Activated T-helper 2 cell treated with anti-CD3 and anti-CD28 coated beads, Interferon-gamma antibody, Interleukin-2, Interleukin-4, amounts not matched to agents 10 μg/mL and 5 μg/mL and 100 μg/mL, durations not matched to agents 14 hours and 24 hours and 36 hours (primary cell): ENCODE measurements at regions of chr12 and their contacts with region 1.

Region 1: DNA sequence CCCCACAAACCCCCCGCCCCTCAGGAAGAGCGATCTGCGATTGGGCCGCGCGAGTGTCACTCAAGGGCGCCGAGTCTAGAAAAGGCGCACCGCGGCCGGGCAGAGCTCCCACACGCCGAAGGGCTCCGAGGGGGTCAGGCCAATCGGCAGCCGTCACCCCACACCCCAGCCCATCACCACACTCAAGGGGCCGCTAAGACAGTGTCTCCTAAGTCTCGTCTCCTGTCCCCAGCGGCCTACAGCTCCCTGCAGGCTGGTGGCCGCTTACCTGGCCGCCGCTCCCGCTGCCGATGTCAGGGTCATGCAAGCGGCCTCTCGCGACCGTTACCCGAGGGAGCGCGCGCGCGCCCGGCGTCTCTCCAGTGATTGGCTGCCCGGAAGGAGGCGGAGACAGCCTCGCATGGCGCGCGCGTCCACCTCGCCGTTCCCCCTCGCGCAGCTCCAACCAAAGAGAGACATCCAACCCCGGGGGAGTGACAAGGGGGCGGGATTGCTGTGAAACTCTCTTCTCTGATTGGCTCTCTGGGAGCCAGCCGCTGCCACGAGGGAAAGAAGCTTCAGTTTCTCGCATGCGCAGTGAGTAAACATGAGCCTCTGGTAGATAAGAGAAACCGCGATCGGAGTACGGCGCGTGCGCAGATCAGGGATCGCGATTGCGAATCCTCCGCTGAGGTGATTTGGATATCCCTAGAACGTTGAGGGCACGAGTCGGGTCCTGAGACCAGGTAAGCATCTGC is at the starts of genes MPHOSPH9 and MTRFR:
- DNase-seq: peak; percentile 99
- H3K4me3 Mint-ChIP-seq: peak within 1 kb of the TSS; percentile 96
- H3K27ac Mint-ChIP-seq: peak within 1 kb of the TSS; percentile 91
- H3K4me1 Mint-ChIP-seq: peaks cover 50% of the 10 kb centered on the region
- H3K27me3 Mint-ChIP-seq: no peaks in the 10 kb centered on the region
- total RNA-seq, gene MPHOSPH9: 97.0 and 99.7 TPM in 2 replicates
- total RNA-seq, gene MTRFR: 28.9 and 31.1 TPM in 2 replicates

Region 2: DNA sequence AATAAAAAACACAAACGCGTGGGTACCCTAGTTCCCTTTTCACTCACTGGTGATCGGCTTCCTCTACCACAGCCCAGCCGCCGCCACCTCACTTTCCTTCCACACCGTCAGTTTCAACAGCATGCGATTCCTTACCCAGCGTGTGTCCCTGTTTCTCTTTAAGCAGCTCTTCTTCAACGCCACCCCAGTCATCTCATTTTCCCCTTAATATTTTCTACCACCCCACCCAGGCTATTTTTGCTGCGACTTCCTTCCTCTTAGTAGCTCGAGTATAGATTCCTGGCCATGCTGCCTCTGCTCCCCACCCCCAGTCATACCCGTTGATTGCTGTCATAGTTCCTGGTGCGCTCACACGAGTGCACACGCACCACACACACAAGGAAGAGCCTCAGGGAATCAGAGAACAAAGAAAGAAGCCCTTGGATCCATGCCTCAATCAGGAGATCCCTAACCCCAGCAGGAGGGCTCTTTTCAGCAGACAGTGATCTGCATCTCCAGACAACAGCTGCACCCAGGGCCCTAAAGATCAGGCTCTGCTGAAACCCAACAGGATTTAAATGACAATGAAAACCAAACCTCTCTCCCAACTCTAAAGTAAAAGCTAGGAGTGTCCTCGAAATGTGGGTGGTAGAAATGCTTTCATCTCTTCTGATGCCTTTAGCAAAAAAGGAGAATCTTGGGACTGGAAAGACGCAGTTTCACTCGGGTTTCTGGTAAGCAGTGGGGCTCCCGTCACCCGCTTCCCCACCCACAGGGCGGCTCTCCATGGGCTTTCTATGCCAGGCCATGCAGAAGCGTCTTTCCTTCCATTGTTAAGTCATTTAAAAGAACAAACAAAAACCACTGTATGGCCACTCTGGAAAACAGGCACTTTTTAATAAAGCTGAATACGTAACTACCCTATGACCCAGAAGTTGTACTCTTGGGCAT is 360.9 kb before region 1 on chr12:
- intact Hi-C with region 1: loop called (anchors 5 kb)
- DNase-seq: no peak
- H3K4me3 Mint-ChIP-seq: peak overlapping the region; percentile 59
- H3K27ac Mint-ChIP-seq: peak overlapping the region; percentile 69
- H3K4me1 Mint-ChIP-seq: peaks cover 49% of the 10 kb centered on the region
- H3K27me3 Mint-ChIP-seq: peaks cover 16% of the 10 kb centered on the region

Region 3: GRCh38 chr12:122974274-122974891 is 258.6 kb before region 1 on chr12:
- intact Hi-C with region 1: loop called (anchors 1 kb)
- DNase-seq: peak; percentile 98
- H3K4me3 Mint-ChIP-seq: peak overlapping the region; percentile 93
- H3K27ac Mint-ChIP-seq: peak overlapping the region; percentile 98
- H3K4me1 Mint-ChIP-seq: peaks cover 11% of the 10 kb centered on the region
- H3K27me3 Mint-ChIP-seq: no peaks in the 10 kb centered on the region

Region 4: GRCh38 chr12:123024819-123025391 is 208.1 kb before region 1 on chr12:
- intact Hi-C with region 1: loop called (anchors 5 kb)
- DNase-seq: no peak
- H3K4me3 Mint-ChIP-seq: no peak overlapping the region
- H3K27ac Mint-ChIP-seq: peak overlapping the region; percentile 42
- H3K4me1 Mint-ChIP-seq: peaks cover 20% of the 10 kb centered on the region
- H3K27me3 Mint-ChIP-seq: no peaks in the 10 kb centered on the region

Region 5: DNA sequence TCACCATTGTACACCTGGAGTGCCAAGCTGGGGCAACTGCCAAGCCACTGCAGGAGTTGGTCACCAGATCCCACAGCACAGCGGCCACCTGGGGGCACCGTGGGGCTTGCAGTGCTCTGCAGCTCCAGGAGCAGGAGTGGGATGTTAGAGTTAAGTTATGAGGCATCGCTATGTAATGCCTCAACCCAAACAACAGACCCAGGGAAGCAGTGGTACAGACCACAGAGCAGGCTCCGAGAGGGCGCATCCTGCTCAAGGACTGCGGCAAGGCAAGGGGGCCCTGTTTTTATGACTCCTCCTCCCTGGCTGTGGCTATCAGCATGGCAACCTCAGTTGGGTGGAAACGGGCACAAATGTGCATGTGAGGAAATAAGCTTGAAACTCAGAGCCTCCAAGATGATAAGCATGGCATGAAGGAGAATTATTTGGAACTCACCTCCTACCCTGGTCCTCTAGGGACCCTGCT is 189.4 kb before region 1 on chr12:
- intact Hi-C with region 1: loop called (anchors 1 kb)
- DNase-seq: peak; percentile 56
- H3K4me3 Mint-ChIP-seq: no peak overlapping the region
- H3K27ac Mint-ChIP-seq: peak overlapping the region; percentile 56
- H3K4me1 Mint-ChIP-seq: peaks cover 16% of the 10 kb centered on the region
- H3K27me3 Mint-ChIP-seq: no peaks in the 10 kb centered on the region

Region 6: DNA sequence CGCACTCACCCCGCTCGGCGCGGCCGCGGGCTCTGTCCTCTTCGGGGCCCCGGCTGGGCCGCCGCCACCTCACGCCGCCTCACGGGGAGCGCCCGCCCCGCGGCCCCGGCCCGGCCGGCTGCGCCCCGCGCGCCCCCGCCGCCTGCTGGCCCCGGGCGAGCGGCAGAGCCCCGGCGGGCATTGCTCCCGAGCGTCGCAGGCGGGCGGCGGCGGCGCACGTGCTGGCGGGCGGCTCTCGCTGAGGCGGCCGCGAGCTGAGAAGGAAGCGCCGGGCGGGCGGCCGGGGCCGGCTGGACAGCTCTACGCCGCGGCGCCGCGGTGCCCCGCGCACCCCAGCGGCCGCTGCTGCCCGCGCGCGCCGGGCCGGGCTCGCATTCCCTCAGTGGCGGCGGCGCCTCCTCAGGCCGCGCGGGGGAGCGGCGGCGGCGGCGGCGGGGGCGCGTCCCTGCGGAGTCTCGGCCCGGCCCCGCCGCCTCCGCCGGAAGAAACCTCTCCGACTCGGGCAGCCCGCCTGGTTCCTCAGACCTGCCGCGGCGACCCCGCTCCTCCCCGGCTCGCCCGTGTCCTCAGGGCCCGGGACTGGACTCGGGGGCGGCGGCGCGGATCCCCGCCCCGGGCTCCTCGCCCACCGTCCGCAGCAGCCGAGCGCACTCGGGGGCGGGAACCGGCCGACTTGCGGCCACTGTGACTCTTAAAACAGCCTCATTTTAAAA is 82.1 kb before region 1 on chr12 and contains the start of gene PITPNM2:
- intact Hi-C with region 1: loop called (anchors 5 kb)
- DNase-seq: peak; percentile 55
- H3K4me3 Mint-ChIP-seq: peak within 1 kb of the TSS; percentile 84
- H3K27ac Mint-ChIP-seq: peak within 1 kb of the TSS; percentile 78
- H3K4me1 Mint-ChIP-seq: peaks cover 20% of the 10 kb centered on the region
- H3K27me3 Mint-ChIP-seq: peaks cover 20% of the 10 kb centered on the region
- total RNA-seq, gene PITPNM2: 15.5 and 16.2 TPM in 2 replicates

Region 7: DNA sequence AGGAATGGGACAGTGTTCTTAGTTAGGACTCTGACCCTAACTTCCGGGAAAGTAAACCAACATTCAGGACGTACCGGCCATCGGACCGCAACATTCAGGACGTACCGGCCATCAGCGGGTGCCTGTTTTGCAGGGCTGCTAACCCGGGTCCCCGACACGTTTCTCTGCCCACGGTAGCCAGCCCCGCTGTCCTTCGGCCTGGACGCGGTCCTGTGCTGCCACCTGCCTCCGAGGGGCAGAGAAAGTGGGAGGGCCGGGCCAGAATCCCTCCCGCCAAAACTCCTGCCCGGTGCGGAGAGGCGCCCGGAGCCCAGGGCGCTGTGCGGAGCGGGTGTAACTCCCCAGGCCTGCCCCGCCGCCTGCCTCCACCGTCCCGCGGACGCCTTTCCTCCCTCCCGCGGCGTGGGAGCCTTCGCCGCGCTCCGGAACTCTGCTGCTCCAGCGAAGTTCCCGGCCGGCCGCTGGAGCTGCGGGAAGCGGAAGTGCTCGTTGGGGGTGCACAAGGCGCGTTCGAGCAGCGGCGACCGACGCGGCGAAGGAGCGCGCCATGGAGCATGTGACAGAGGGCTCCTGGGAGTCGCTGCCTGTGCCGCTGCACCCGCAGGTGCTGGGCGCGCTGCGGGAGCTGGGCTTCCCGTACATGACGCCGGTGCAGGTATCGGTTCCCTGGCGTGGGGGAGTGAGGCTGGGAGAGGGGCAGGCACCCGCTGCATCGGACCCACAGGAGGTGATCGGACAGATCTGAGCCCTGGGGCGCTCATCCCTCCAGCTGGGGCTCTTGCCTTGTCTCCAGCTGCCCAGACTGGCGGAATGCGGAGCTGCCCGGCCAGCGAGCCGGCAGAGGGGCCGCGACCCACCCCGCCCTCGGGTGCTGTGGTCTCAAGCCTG is 368.9 kb after region 1 on chr12 and contains the start of gene DDX55:
- intact Hi-C with region 1: loop called (anchors 5 kb)
- DNase-seq: peak; percentile 83
- H3K4me3 Mint-ChIP-seq: peak within 1 kb of the TSS; percentile 96
- H3K27ac Mint-ChIP-seq: peak within 1 kb of the TSS; percentile 95
- H3K4me1 Mint-ChIP-seq: peaks cover 18% of the 10 kb centered on the region
- H3K27me3 Mint-ChIP-seq: no peaks in the 10 kb centered on the region
- total RNA-seq, gene DDX55: 60.0 and 63.2 TPM in 2 replicates